Activated T-helper 2 cell treated with anti-CD3 and anti-CD28 coated beads, Interferon-gamma antibody, Interleukin-2, Interleukin-4, amounts not matched to agents 10 μg/mL and 5 μg/mL and 100 μg/mL, durations not matched to agents 14 hours and 24 hours and 36 hours (primary cell): ENCODE measurements at regions of chr16 and their contacts with region 1.

Region 1: GRCh38 chr16:20938426-20938825 is 37.9 kb downstream of the LYRM1 start:
- DNase-seq: no peak
- H3K4me3 Mint-ChIP-seq: no peak overlapping the region
- H3K27ac Mint-ChIP-seq: peak overlapping the region; percentile 82
- H3K4me1 Mint-ChIP-seq: peaks cover 42% of the 10 kb centered on the region
- H3K27me3 Mint-ChIP-seq: no peaks in the 10 kb centered on the region

Region 2: GRCh38 chr16:20874088-20874581 is 64.3 kb before region 1 on chr16:
- intact Hi-C with region 1: loop called (anchors 2 kb)
- DNase-seq: no peak
- H3K4me3 Mint-ChIP-seq: peak overlapping the region; percentile 62
- H3K27ac Mint-ChIP-seq: peak overlapping the region; percentile 74
- H3K4me1 Mint-ChIP-seq: peaks cover 80% of the 10 kb centered on the region
- H3K27me3 Mint-ChIP-seq: no peaks in the 10 kb centered on the region

Region 3: GRCh38 chr16:20879175-20880040 is 59.0 kb before region 1 on chr16:
- intact Hi-C with region 1: loop called (anchors 2 kb)
- DNase-seq: no peak
- H3K4me3 Mint-ChIP-seq: no peak overlapping the region
- H3K27ac Mint-ChIP-seq: peak overlapping the region; percentile 76
- H3K4me1 Mint-ChIP-seq: peaks cover 77% of the 10 kb centered on the region
- H3K27me3 Mint-ChIP-seq: no peaks in the 10 kb centered on the region